ENCODE measurements at regions of chr3 and their contacts with region 1.

Region 1: DNA sequence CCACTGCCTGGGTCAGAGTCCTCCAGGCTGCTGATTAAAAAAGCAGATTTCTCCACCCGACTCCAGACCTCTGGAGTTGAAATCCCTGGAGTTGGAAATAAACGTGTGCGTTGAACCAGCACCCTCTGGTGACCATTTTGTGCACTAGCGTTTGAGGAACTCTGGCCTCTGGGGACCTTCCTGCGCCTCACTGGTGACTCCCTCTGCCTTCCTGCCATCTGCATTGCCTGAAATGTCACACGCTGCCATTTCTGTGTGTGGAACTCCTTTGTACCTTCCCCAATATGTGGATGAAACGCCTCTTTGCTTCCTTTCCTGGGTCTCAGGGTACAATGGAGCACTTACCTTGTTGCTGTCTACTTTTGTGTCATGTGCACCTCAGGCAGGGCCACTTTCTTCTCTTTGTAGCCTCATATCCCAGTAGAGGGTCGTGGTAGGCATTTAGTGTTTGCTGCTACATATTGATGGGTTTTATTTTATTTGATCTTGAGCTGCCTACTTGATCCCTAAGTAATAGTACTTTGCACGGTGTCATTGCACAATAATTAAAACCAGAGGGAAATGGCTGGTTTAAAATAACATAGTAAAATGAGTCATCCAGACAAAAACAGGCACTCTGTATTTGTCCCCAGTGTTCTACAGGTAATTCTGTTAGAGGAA is 56.8 kb downstream of the GPR171 start:
- DNase-seq: peak; percentile 71
- ATAC-seq: peak; percentile 93

Region 2: GRCh38 chr3:150721285-150722130 is 424.7 kb before region 1 on chr3:
- intact Hi-C with region 1: loop called (anchors 2 to 10 kb)
- DNase-seq: no peak
- ATAC-seq: peak; percentile 65 to 72

Region 3: GRCh38 chr3:150787741-150788370 is 358.3 kb before region 1 on chr3:
- intact Hi-C with region 1: loop called (anchors 2 to 5 kb)
- DNase-seq: peak; percentile 89
- ATAC-seq: peak; percentile 80 to 82

Region 4: DNA sequence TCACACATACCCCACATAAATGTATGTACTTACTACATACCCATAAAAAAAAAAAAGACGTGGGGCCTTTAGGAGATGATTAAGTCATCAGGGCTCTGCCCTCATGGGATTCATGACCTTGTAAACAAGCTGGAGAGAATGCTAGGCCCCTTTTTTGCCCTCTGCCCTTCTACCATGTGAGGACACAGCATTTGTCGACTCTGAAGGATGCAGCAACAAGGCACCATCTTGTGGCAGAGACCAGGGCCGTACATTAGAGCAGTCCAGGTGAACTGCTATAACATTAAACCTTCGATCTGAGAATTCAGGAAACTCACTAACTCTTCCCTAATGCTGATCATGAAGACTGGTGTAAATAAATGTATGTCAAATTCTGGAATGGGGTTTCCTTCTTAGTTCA is 352.6 kb before region 1 on chr3:
- intact Hi-C with region 1: loop called in 1 of 2 experiments (anchors 5 kb)
- DNase-seq: no peak
- ATAC-seq: no peak

Region 5: GRCh38 chr3:150956376-150956775 is 189.8 kb before region 1 on chr3:
- intact Hi-C with region 1: no loop called
- DNase-seq: no peak
- ATAC-seq: peak in 1 of 2 donors; percentile 76